ENCODE measurements at regions of chr17 and their contacts with region 1.

Region 1: GRCh38 chr17:70622368-70623260 is 453.3 kb downstream of the KCNJ2 start:
- DNase-seq: peak; percentile 36 to 95 (median 80)

Region 2: GRCh38 chr17:69523244-69523861 is 1099.3 kb before region 1 on chr17:
- intact Hi-C with region 1: loop called (anchors 5 kb)
- DNase-seq: peak in 4 of 10 donors; percentile 20 to 45 (median 28)

Region 3: GRCh38 chr17:69574257-69575197 is 1048.1 kb before region 1 on chr17:
- intact Hi-C with region 1: loop called (anchors 2 kb)
- DNase-seq: no peak

Region 4: GRCh38 chr17:69607162-69607834 is 1015.3 kb before region 1 on chr17:
- intact Hi-C with region 1: loop called (anchors 2 kb)
- DNase-seq: peak; percentile 37 to 96 (median 72)

Region 5: DNA sequence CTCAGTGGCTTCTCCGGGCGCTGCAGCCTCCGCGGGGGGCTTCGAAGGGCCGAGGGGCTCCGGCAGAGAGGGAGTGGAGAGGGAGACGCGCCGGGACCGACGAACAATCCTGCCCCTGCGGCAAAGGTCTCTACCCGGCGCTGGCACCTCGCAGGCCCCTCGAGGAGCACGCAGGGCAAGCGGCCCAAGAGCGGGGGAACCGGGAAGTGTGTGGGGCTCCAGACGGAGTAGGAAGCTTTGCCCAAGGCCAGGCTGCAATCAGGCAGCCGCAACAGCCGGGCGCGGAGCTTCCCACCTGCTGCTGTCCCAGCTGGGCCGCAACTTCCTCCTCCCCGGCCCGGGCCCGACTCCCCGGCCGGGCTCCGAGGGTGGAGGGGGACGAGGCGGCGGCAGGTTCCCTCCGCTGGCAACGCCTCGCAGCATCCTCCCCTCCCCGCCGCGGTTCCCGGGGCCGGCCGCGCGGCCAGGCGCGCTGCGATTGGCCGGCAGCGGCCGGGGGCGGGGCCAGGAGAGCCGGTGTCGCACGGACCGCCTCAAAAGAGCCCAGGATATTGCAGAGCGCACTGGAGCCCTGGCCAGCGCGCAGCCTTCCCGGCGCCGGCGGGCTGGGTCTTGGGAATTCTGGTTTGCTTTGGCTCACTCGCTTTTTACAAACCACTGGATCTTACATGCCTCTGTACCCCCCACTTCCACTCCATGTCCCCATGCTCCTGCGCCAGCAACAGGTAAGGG is 453.5 kb before region 1 on chr17 and contains the start of gene KCNJ2:
- intact Hi-C with region 1: loop called (anchors 2 kb)
- DNase-seq: peak; percentile 84 to 99 (median 89)

Region 6: GRCh38 chr17:70552230-70552981 is 70.2 kb before region 1 on chr17:
- intact Hi-C with region 1: loop called (anchors 5 kb)
- DNase-seq: no peak